CD4-positive, alpha-beta T cell (primary cell): ENCODE measurements at regions of chr22 and their contacts with region 1.

Region 1: DNA sequence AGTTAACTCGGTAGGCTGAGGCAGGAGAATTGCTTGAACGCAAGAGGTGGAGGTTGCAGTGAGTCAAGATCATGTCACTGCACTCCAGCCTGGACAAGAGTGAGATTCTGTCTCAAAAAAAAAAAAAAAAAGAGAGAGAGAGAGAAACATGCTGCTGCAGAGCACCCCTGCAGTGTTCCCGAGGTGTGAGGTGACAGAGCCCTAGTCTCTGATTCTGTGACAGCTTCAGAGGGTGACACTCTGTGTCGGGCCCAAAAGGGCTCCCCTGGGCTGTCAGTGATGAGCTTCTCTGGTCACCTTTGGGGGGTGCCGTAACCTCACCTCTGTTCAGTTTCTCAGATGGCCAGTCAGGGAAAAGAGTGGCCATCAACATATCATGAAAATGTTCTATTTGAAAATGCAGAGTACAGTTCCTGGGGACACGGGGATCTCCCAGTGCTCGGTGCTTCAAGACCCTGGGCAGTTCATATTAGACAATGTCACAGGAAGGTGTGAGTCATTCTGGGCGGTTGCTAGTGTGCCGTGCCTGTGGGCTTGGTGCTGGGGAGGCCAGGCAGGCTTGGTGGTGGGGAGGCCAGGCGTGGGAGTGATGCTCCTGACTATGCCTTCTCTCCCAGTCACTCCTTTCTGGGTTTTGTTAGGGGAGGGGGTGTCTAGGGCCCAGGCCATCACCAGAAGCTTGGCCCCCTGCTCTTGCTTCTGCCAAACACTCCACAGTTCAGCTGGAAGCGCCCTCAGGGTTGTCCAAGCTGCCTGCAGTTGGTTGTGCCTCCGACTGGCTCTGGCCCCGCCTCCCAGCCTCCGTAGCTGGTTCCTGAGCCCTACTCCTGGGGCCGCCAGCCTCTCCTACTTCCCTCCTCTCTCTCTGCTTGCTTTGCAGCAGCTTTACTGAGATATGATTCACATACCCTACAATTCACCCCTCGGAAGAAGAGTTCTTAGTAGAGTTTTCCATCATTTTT is 52.5 kb upstream of the CLDN5 start:
- DNase-seq: peak in 11 of 14 experiments; percentile 19 to 64 (median 40)
- ATAC-seq: peak; percentile 69
- H3K4me3 ChIP-seq: no peak overlapping the region
- H3K4me3 Mint-ChIP-seq: no peak overlapping the region
- H3K27ac ChIP-seq: no peak overlapping the region
- H3K27ac Mint-ChIP-seq: no peak overlapping the region
- H3K4me1 ChIP-seq: peaks cover 33% of the 10 kb centered on the region
- H3K4me1 Mint-ChIP-seq: peaks cover 40% of the 10 kb centered on the region
- H3K27me3 ChIP-seq: no peaks in the 10 kb centered on the region
- H3K27me3 Mint-ChIP-seq: no peaks in the 10 kb centered on the region
- CTCF ChIP-seq: no peak

Region 2: GRCh38 chr22:19503869-19504268 is 72.9 kb before region 1 on chr22:
- CTCF ChIA-PET with region 1: no interaction called
- POLR2A ChIA-PET with region 1: no interaction called
- intact Hi-C with region 1: loop called in 1 of 2 experiments (anchors 5 kb)
- DNase-seq: no peak
- ATAC-seq: no peak
- H3K4me3 ChIP-seq: no peak overlapping the region
- H3K4me3 Mint-ChIP-seq: no peak overlapping the region
- H3K27ac ChIP-seq: no peak overlapping the region
- H3K27ac Mint-ChIP-seq: no peak overlapping the region
- H3K4me1 ChIP-seq: peaks cover 13% of the 10 kb centered on the region
- H3K4me1 Mint-ChIP-seq: peaks cover 12% of the 10 kb centered on the region
- H3K27me3 ChIP-seq: no peaks in the 10 kb centered on the region
- H3K27me3 Mint-ChIP-seq: no peaks in the 10 kb centered on the region
- CTCF ChIP-seq: no peak

Region 3: DNA sequence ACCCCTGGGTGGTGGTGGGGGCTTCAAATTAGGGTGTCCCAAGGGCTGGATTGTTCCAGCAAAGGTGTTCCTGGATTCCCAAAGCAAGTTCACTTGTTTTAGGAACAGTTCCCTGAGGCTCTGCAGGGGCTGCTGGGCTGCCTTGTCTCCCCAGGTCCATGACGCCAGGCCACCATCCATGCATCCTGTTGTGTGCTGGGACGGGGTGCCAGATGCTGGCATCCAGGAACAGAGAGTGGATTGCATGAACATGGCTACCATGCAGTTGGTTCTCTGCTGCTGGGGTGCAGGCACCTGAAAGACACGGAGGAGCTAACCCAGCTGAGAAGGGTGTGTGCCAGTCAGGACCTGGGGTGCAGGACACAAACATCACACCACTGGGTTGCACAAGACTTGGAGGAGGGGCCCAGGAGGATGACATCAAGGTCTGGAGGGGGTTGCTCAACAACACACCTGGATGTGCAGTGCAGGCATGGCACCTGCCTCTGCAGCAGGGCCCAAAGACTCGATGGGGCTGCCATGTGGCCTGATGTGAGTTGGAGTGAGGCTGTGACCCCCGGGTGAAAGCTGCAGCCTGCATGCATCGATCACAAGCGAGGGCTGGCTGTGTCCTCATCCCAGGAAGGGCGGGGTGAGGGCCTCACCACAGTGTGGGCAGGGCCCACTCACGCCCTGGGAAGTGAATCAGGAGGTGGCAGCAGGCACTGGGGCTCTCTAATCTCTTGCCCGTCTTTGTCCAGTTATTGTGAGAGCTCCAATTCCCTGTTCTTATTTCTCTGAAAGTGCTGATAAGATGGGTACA is 21.5 kb after region 1 on chr22:
- CTCF ChIA-PET with region 1: no interaction called
- POLR2A ChIA-PET with region 1: interaction called, 12 read pairs
- intact Hi-C with region 1: loop called in 1 of 2 experiments (anchors 2 kb)
- DNase-seq: peak in 9 of 14 experiments; percentile 18 to 48 (median 42)
- ATAC-seq: peak; percentile 30
- H3K4me3 ChIP-seq: peak overlapping the region; percentile 0
- H3K4me3 Mint-ChIP-seq: peak overlapping the region; percentile 57
- H3K27ac ChIP-seq: peak overlapping the region; percentile 74 to 87
- H3K27ac Mint-ChIP-seq: peak overlapping the region; percentile 93
- H3K4me1 ChIP-seq: peaks cover 51% of the 10 kb centered on the region
- H3K4me1 Mint-ChIP-seq: peaks cover 76% of the 10 kb centered on the region
- H3K27me3 ChIP-seq: no peaks in the 10 kb centered on the region
- H3K27me3 Mint-ChIP-seq: no peaks in the 10 kb centered on the region
- CTCF ChIP-seq: no peak

Region 4: DNA sequence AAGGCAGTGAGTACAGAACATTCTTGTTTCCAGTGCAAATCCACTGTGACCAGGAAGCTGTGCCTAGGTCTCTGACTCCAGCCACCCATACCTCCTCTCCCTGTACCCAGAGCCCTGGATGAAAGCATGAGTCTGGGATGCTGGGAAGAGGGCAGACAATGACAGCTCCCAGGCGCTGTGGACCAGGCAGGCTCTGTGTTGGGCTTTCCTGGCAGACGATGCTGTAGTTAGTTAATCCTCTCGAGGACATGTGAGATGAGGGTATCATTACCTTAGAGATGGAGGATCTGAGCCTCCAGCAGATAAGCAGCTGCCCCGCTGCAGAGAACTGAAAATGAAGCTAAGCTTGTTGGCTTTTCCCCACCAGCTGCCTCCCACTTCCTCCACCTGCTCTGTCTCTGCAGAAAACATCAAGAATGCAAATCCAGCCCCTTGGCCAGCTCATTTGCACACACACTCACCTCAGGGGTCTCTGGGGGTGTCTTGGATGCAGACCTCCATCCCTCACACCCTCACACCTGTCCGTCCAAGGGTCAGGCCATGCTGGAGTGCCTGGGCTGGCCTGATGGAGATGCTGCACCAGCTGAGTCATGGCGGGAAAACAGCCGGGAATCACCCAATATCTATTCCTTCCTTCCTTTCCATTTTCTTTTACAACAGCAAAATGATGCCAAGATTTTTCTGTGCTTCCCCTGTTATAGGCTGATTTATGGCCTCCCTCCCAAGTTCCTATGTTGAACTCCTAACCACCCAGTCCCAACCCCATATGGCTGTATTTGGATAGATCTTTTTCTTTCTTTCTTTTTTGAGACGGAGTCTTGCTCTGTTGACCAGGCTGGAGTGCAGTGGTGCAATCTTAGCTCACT is 42.6 kb after region 1 on chr22:
- CTCF ChIA-PET with region 1: no interaction called
- POLR2A ChIA-PET with region 1: no interaction called
- intact Hi-C with region 1: no loop called
- DNase-seq: no peak
- ATAC-seq: no peak
- H3K4me3 ChIP-seq: no peak overlapping the region
- H3K4me3 Mint-ChIP-seq: no peak overlapping the region
- H3K27ac ChIP-seq: no peak overlapping the region
- H3K27ac Mint-ChIP-seq: no peak overlapping the region
- H3K4me1 ChIP-seq: peaks cover 8% of the 10 kb centered on the region
- H3K4me1 Mint-ChIP-seq: peaks cover 13% of the 10 kb centered on the region
- H3K27me3 ChIP-seq: peaks cover 0 to 2% of the 10 kb centered on the region in 2 experiments
- H3K27me3 Mint-ChIP-seq: no peaks in the 10 kb centered on the region
- CTCF ChIP-seq: no peak